Activated CD4-positive, alpha-beta T cell treated with anti-CD3 and anti-CD28 coated beads, Interleukin-2, amount 10 ng/mL, durations not matched to agents 24 days and 14 days (primary cell): ENCODE measurements at regions of chr6 and their contacts with region 1.

Region 1: DNA sequence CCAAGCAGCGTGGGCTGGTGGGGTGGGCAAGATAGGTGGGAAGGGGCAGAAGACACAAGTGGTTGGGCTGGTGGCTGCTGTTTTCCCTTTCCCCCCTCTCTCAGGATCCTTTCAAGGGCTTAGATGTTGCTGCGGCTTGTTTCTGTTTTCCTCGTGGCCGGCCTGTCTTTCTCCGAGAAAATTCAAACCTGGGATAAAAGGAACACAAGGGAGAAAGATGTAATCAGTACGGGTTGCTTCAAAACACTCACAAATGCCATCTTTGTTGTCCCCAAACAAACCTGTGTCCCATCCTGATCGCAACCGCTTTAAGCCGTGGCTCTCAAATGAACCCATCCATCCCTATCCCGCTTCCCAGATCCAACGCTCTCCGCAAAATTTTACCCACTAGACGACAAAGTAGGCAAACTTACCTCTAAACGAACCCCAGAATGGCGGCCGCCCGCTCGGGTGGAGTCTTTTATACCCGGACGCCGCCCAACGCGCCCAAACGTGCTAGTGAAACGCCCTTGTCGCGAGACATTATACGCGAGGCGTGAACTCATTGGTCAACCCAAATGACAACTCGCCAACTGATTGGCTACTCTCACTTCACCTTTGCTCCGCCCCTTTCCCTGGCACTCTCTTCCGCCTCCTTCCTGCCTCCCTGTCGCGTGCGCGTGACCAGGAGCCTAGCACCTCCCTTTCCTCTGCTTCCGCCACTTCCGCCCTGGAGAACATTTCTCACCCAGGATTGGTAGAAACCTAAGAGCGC is at the start of gene PPP1R10:
- DNase-seq: peak; percentile 100
- H3K4me3 Mint-ChIP-seq: peak within 1 kb of the TSS; percentile 90
- H3K27ac Mint-ChIP-seq: peak within 1 kb of the TSS; percentile 92
- H3K4me1 Mint-ChIP-seq: peaks cover 42% of the 10 kb centered on the region
- H3K27me3 Mint-ChIP-seq: peaks cover 6% of the 10 kb centered on the region
- total RNA-seq, gene PPP1R10: 106 and 107 TPM in 2 replicates

Region 2: GRCh38 chr6:30066577-30067459 is 550.2 kb before region 1 on chr6 and contains the start of gene PPP1R11:
- intact Hi-C with region 1: loop called (anchors 10 kb)
- DNase-seq: peak; percentile 99
- H3K4me3 Mint-ChIP-seq: peak within 1 kb of the TSS; percentile 93
- H3K27ac Mint-ChIP-seq: peak within 1 kb of the TSS; percentile 99
- H3K4me1 Mint-ChIP-seq: peaks cover 45% of the 10 kb centered on the region
- H3K27me3 Mint-ChIP-seq: peaks cover 16% of the 10 kb centered on the region
- total RNA-seq, gene PPP1R11: 60.9 and 61.1 TPM in 2 replicates

Region 3: GRCh38 chr6:30556066-30556905 is 60.7 kb before region 1 on chr6 and contains the start of gene GNL1:
- intact Hi-C with region 1: loop called (anchors 1 kb)
- DNase-seq: peak; percentile 99
- H3K4me3 Mint-ChIP-seq: peak within 1 kb of the TSS; percentile 89
- H3K27ac Mint-ChIP-seq: peak within 1 kb of the TSS; percentile 97
- H3K4me1 Mint-ChIP-seq: peaks cover 29% of the 10 kb centered on the region
- H3K27me3 Mint-ChIP-seq: no peaks in the 10 kb centered on the region
- total RNA-seq, gene GNL1: 80.9 and 93.0 TPM in 2 replicates

Region 4: GRCh38 chr6:30646458-30647241 is 29.7 kb after region 1 on chr6 and contains the start of gene C6orf136:
- intact Hi-C with region 1: loop called (anchors 1 kb)
- DNase-seq: peak; percentile 97
- H3K4me3 Mint-ChIP-seq: peak within 1 kb of the TSS; percentile 91
- H3K27ac Mint-ChIP-seq: peak within 1 kb of the TSS; percentile 94
- H3K4me1 Mint-ChIP-seq: peaks cover 28% of the 10 kb centered on the region
- H3K27me3 Mint-ChIP-seq: no peaks in the 10 kb centered on the region
- total RNA-seq, gene C6orf136: 28.9 and 39.4 TPM in 2 replicates

Region 5: DNA sequence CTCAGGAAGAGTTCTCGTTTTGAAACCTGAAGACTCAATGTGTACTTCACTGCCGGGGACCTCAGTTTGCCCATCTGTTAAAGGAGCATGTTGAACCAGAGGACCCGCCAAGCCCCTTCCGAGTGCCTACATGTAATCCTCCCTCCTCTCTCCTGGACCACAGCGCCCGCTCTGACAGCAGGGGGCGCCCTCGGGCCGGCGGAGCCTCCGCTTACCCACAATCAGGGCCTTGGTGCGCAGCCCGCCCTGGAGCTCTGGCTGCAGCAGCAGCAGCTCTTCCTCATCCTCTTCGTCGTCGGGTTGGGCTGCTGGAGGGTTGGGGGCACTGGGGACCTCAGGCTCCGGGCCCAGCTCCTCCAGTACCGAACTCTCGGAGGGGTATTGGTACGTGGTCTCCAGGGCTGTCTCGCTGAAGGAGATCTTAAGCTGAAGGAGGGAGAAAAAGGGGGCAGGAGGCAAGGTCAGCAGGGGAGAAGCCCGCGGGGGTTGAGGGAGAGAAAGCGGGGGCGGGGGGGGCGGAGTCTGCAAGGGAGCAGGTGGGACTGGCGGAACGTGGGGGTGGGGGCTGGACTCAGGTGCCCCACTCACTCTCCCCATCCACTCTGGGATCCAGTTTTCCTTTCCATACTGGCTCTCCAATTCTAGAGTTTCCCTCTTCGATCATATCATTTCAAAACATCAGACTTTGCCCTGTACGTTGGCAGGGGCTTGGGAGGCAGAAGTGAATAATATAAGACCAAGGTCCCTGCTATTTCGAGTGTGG is 62.2 kb after region 1 on chr6:
- intact Hi-C with region 1: loop called (anchors 1 kb)
- DNase-seq: peak; percentile 97
- H3K4me3 Mint-ChIP-seq: peak overlapping the region; percentile 94
- H3K27ac Mint-ChIP-seq: peak overlapping the region; percentile 97
- H3K4me1 Mint-ChIP-seq: peaks cover 40% of the 10 kb centered on the region
- H3K27me3 Mint-ChIP-seq: no peaks in the 10 kb centered on the region

Region 6: GRCh38 chr6:30742316-30743098 is 125.5 kb after region 1 on chr6 and contains the start of gene FLOT1:
- intact Hi-C with region 1: loop called (anchors 2 kb)
- DNase-seq: peak; percentile 98
- H3K4me3 Mint-ChIP-seq: peak within 1 kb of the TSS; percentile 98
- H3K27ac Mint-ChIP-seq: peak within 1 kb of the TSS; percentile 94
- H3K4me1 Mint-ChIP-seq: peaks cover 60% of the 10 kb centered on the region
- H3K27me3 Mint-ChIP-seq: no peaks in the 10 kb centered on the region
- total RNA-seq, gene FLOT1: 239 and 260 TPM in 2 replicates

Region 7: DNA sequence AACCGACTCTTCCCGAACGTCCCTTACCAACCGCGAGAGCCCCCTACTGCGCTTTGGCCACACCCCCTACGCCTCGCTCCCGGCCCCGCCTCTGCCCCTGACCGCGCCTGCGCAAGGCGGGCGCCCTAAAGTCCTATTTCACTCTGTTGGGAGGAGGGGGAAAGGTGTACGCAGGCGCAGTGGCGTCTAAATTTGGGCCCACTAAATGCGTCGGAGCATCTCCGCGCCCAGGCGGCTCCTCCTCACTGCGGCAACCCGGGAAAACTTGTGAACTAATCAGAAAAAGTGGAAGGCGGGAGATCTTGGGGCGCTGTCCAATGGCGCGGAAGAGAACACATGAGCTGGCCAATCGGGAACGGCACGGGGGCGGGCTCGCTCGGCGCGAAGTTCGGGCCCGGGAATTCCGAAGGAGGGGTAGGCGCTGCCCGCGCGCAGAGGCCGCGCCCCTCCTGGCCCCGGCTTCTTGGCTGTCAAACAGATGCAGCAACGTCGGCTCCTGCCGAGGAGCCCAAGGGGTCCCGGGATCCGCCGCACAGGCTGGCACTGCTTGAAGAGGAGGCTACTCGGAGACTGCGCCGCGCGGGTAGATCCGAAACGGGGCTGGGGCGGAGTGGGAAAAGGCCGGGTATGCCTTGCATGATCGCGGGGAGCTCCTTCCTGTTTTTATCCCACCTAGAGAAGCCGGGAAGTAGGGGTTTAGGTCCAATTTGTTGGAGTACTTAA is 541.3 kb after region 1 on chr6 and contains the start of gene TCF19:
- intact Hi-C with region 1: loop called (anchors 5 kb)
- DNase-seq: peak; percentile 100
- H3K4me3 Mint-ChIP-seq: peak within 1 kb of the TSS; percentile 97
- H3K27ac Mint-ChIP-seq: peak within 1 kb of the TSS; percentile 89
- H3K4me1 Mint-ChIP-seq: peaks cover 41% of the 10 kb centered on the region
- H3K27me3 Mint-ChIP-seq: peaks cover 3% of the 10 kb centered on the region
- total RNA-seq, gene TCF19: 79.5 and 82.6 TPM in 2 replicates